Activated CD4-positive, alpha-beta T cell treated with anti-CD3 and anti-CD28 coated beads for 36 hours (primary cell): ENCODE measurements at regions of chr20 and their contacts with region 1.

Region 1: DNA sequence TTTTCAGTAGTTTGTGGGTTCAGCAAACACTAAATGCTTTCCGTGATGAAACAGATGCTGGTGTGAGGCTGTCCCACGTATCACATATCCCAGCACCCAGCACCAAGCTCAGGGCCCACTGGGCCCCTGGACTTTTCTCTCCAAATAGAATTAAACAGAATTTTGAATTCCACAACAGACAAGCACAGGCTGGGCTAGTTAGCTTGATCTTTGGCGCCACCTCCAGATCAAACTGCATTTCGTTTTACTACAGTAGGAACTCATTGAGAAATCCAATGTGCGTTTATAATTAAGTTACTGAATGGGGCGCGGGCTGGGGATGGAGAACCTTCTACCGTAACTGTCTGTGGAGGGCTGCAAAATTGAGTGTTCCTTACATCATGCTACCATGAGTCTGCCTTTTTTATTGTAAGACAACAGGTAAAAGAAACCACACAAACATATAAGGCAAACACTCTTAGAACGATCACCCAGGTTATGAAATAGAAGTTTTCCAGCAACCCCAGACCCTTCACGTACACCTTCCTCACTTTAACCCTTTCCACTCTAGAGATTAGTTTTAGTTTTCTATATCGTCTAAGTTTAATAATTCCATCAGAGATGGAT is 107.8 kb downstream of the ZFP64 start:
- DNase-seq: peak; percentile 73
- ATAC-seq: no peak
- H3K4me3 Mint-ChIP-seq: no peak overlapping the region
- H3K27ac Mint-ChIP-seq: no peak overlapping the region
- H3K4me1 Mint-ChIP-seq: peaks cover 6% of the 10 kb centered on the region
- H3K27me3 Mint-ChIP-seq: no peaks in the 10 kb centered on the region

Region 2: DNA sequence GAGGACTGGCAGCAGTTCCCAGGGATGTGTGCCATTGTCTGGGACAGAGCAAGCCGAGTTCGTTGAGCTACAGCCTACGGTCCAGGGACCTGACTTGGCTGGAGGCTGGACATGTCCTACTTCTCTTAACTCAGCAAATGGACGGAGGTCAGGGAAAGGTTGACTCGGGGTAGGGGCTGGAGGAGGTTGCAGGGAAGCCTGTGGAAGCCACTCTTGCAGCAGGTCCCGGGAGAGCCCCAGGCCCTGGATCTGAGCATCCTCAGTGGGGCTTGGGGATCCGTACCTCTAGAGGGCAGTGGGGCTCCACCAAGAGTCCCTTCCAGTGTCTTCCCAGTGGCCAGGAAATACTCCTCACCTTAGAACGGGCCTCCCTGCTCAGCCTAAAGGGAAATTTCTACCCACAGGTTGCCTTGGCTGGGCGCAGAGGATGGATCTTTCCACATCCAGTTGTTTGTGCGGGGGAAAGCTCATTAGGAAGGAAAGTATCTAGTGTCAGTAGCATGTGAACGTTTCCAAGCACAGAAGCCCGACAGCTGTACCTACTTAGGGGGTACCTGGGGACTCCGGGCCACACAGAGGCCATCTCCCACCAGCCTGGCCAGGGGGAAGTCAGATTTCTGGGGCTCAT is 711.4 kb before region 1 on chr20:
- CTCF ChIA-PET with region 1: no interaction called
- POLR2A ChIA-PET with region 1: no interaction called
- intact Hi-C with region 1: loop called in 1 of 2 experiments (anchors 10 kb)
- DNase-seq: peak; percentile 79
- ATAC-seq: peak; percentile 94
- H3K4me3 Mint-ChIP-seq: no peak overlapping the region
- H3K27ac Mint-ChIP-seq: no peak overlapping the region
- H3K4me1 Mint-ChIP-seq: no peaks in the 10 kb centered on the region
- H3K27me3 Mint-ChIP-seq: no peaks in the 10 kb centered on the region

Region 3: GRCh38 chr20:51639206-51639832 is 444.4 kb before region 1 on chr20:
- CTCF ChIA-PET with region 1: interaction called, 5 read pairs
- POLR2A ChIA-PET with region 1: no interaction called
- intact Hi-C with region 1: loop called (anchors 1 to 2 kb)
- DNase-seq: peak; percentile 81
- ATAC-seq: peak; percentile 49
- H3K4me3 Mint-ChIP-seq: no peak overlapping the region
- H3K27ac Mint-ChIP-seq: no peak overlapping the region
- H3K4me1 Mint-ChIP-seq: peaks cover 9% of the 10 kb centered on the region
- H3K27me3 Mint-ChIP-seq: peaks cover 4% of the 10 kb centered on the region

Region 4: GRCh38 chr20:51703400-51704287 is 380.1 kb before region 1 on chr20:
- CTCF ChIA-PET with region 1: no interaction called
- POLR2A ChIA-PET with region 1: no interaction called
- intact Hi-C with region 1: loop called (anchors 2 to 5 kb)
- DNase-seq: no peak
- ATAC-seq: no peak
- H3K4me3 Mint-ChIP-seq: no peak overlapping the region
- H3K27ac Mint-ChIP-seq: no peak overlapping the region
- H3K4me1 Mint-ChIP-seq: no peaks in the 10 kb centered on the region
- H3K27me3 Mint-ChIP-seq: peaks cover 6% of the 10 kb centered on the region

Region 5: GRCh38 chr20:52056203-52057062 is 27.3 kb before region 1 on chr20:
- CTCF ChIA-PET with region 1: no interaction called
- POLR2A ChIA-PET with region 1: no interaction called
- intact Hi-C with region 1: no loop called
- DNase-seq: no peak
- ATAC-seq: no peak
- H3K4me3 Mint-ChIP-seq: no peak overlapping the region
- H3K27ac Mint-ChIP-seq: no peak overlapping the region
- H3K4me1 Mint-ChIP-seq: no peaks in the 10 kb centered on the region
- H3K27me3 Mint-ChIP-seq: no peaks in the 10 kb centered on the region